AG04450 (cell line): ENCODE measurements at regions of chr1 and their contacts with region 1.

Region 1: DNA sequence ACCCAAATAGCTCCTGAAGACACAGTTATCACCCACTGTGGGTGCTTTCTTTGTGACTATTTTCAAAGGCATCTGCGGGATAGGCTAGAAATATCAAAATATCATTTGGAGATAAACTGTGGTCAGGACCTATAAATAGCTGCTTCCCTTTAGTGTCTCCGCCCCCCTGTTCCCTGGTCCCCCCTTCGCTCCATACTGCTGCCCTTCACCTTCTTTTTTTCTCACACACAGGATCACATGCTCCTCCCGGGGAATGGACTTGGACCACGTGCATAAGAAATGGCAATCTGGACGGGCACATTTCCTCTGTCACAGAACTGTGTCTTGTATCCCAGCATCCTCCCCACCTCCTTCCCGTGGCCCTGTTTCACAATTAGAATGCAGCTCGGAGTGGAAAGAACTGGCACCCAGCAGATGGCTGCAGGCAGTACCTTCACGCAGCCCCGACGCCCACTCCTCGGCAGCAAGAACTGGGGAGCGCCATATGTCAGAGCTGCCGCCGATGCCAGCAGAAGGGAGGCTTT is 68.8 kb upstream of the SSX2IP start:
- DNase-seq: no peak
- H3K4me3 ChIP-seq: no peak overlapping the region
- H3K27ac ChIP-seq: no peak overlapping the region
- H3K27me3 ChIP-seq: peaks cover 4% of the 10 kb centered on the region
- CTCF ChIP-seq: no peak

Region 2: DNA sequence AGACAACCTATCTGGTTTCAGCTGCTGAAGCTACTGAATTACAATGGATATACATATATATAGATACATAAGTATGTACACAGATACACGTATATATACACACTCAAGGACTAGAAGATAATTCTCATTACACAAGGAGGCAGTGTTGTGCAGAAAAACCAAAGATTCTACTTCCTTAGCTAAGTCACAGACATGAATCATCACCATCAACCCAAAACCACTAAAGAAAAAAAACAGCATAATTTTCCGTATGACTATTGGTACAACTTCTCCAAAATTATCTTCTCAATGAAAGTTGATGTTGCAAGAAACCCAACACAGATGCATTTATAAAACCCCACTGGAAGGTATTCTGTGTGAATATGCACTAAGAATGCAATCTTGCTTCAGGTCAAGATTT is 316.8 kb before region 1 on chr1:
- CTCF ChIA-PET with region 1: interaction called, 62 read pairs
- POLR2A ChIA-PET with region 1: interaction called, 3 read pairs
- DNase-seq: peak; percentile 78
- H3K4me3 ChIP-seq: no peak overlapping the region
- H3K27ac ChIP-seq: no peak overlapping the region
- H3K27me3 ChIP-seq: no peaks in the 10 kb centered on the region
- CTCF ChIP-seq: peak; percentile 57

Region 3: GRCh38 chr1:84715342-84716019 is 43.5 kb before region 1 on chr1:
- CTCF ChIA-PET with region 1: no interaction called
- POLR2A ChIA-PET with region 1: no interaction called
- DNase-seq: no peak
- H3K4me3 ChIP-seq: no peak overlapping the region
- H3K27ac ChIP-seq: no peak overlapping the region
- H3K27me3 ChIP-seq: no peaks in the 10 kb centered on the region
- CTCF ChIP-seq: no peak